Tibial artery (tissue), 4 donors: ENCODE measurements at regions of chr1 and their contacts with region 1.

Region 1: GRCh38 chr1:116737020-116737854 is 17.0 kb upstream of the CD2 start:
- DNase-seq: peak in 1 of 2 donors; percentile 32
- H3K4me3 ChIP-seq: no peak overlapping the region
- H3K27ac ChIP-seq: no peak overlapping the region
- H3K4me1 ChIP-seq: no peaks in the 10 kb centered on the region
- H3K27me3 ChIP-seq: no peaks in the 10 kb centered on the region
- CTCF ChIP-seq: peak; percentile 48 to 54

Region 2: GRCh38 chr1:117051224-117052064 is 314.2 kb after region 1 on chr1:
- intact Hi-C with region 1: loop called (anchors 5 kb)
- DNase-seq: no peak
- H3K4me3 ChIP-seq: no peak overlapping the region
- H3K27ac ChIP-seq: no peak overlapping the region
- H3K4me1 ChIP-seq: no peaks in the 10 kb centered on the region
- H3K27me3 ChIP-seq: no peaks in the 10 kb centered on the region
- CTCF ChIP-seq: no peak